Activated T-helper 2 cell treated with anti-CD3 and anti-CD28 coated beads, Interferon-gamma antibody, Interleukin-2, Interleukin-4, amounts not matched to agents 10 μg/mL and 5 μg/mL and 100 μg/mL, durations not matched to agents 14 hours and 24 hours and 36 hours (primary cell): ENCODE measurements at regions of chr10 and their contacts with region 1.

Region 1: DNA sequence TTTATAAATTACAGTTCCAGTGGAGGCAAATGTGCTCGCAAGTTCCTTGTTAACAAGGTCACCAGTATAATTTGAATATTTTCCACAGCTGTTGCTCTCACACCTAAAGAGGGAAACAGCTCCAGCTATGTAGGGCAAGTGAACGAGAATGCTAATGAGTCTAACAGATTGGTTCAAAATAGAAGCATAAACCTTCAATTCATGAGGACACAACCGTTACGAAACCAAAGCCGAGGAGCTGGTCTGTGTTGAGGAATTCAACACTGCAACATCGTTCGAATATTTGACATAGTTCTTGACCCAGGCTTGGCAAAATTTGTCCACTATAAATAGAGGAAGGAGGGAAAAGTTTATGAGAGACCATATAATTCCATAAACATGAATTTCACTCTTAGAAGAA is 161.3 kb downstream of the KLF6 start:
- DNase-seq: no peak
- H3K4me3 Mint-ChIP-seq: no peak overlapping the region
- H3K27ac Mint-ChIP-seq: no peak overlapping the region
- H3K4me1 Mint-ChIP-seq: peaks cover 28% of the 10 kb centered on the region
- H3K27me3 Mint-ChIP-seq: peaks cover 17% of the 10 kb centered on the region

Region 2: GRCh38 chr10:3226960-3227744 is 396.6 kb before region 1 on chr10:
- intact Hi-C with region 1: loop called (anchors 10 kb)
- DNase-seq: no peak
- H3K4me3 Mint-ChIP-seq: no peak overlapping the region
- H3K27ac Mint-ChIP-seq: no peak overlapping the region
- H3K4me1 Mint-ChIP-seq: peaks cover 15% of the 10 kb centered on the region
- H3K27me3 Mint-ChIP-seq: peaks cover 26% of the 10 kb centered on the region

Region 3: DNA sequence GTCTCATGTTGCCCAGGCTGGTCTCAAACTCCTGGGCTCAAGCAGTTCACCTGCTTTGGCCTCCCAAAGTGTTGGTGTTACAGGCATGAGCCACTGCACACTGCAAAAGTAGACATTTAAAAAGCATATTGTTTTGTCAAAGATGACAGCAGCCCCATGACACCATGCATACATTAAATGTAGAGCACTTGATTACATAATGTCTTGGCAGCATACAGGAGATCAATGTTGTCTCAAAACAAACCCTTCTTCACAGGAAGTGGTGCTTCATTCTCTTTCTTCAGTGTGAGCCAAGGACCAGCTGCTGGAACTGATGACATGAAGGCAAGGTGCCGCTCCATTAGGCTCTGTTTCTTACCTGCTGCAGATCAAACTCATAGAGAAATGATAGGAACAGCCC is 57.1 kb before region 1 on chr10:
- intact Hi-C with region 1: loop called (anchors 2 kb)
- DNase-seq: no peak
- H3K4me3 Mint-ChIP-seq: no peak overlapping the region
- H3K27ac Mint-ChIP-seq: no peak overlapping the region
- H3K4me1 Mint-ChIP-seq: peaks cover 22% of the 10 kb centered on the region
- H3K27me3 Mint-ChIP-seq: peaks cover 4% of the 10 kb centered on the region

Region 4: GRCh38 chr10:3776796-3777571 is 153.2 kb after region 1 on chr10:
- intact Hi-C with region 1: loop called (anchors 1 kb)
- DNase-seq: peak; percentile 40
- H3K4me3 Mint-ChIP-seq: peak overlapping the region; percentile 54
- H3K27ac Mint-ChIP-seq: peak overlapping the region; percentile 70
- H3K4me1 Mint-ChIP-seq: peaks cover 60% of the 10 kb centered on the region
- H3K27me3 Mint-ChIP-seq: no peaks in the 10 kb centered on the region

Region 5: GRCh38 chr10:3948843-3949242 is 325.1 kb after region 1 on chr10:
- intact Hi-C with region 1: loop called (anchors 10 kb)
- DNase-seq: peak; percentile 71
- H3K4me3 Mint-ChIP-seq: peak overlapping the region; percentile 45
- H3K27ac Mint-ChIP-seq: peak overlapping the region; percentile 79
- H3K4me1 Mint-ChIP-seq: peaks cover 50% of the 10 kb centered on the region
- H3K27me3 Mint-ChIP-seq: no peaks in the 10 kb centered on the region